Activated B cell treated with CpG ODN at 0.5 μM for 24 hours (primary cell): ENCODE measurements at regions of chr3 and their contacts with region 1.

Region 1: DNA sequence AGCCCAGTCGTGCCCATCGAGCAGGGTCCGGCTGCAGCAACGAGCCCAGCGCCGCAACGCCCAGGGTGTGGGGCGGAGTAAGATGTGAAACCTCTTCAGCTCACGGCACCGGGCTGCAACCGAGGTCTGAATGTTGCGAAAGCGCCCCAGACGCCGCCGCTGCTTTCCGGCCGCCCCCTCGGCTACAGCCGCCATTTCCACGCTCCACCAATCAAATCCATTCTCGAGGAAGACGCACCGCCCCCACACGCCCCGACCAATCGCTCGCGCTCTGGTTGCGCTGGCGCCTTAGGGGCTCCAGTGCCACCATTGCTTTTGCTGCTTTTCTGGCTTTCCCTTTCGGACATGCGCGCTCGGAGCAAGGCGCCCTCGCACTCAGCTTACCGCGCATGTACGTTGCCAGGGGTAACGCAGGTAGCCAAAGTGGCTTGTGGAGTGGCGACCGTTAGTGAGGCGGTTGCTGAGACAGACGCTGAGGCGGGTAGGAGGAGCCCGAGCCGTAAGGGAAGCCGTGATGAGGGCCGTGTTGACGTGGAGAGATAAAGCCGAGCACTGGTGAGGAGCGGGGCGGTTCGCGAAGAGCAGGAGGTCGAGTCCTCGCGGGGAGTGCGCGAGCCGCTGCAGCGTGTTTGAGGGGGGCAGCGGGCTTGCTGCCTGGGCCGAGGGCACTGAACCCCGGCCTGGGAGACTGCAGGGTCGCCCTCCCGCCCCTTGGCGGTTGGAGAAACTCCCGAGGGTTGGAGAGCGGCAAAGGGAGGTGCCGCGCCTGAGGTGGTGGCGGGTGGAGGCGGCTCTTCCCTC is at the starts of genes IFT122 and MBD4:
- DNase-seq: peak; percentile 92
- ATAC-seq: peak; percentile 83
- H3K4me3 Mint-ChIP-seq: peak within 1 kb of the TSS; percentile 96
- H3K27ac Mint-ChIP-seq: peak within 1 kb of the TSS; percentile 96
- H3K4me1 Mint-ChIP-seq: peaks cover 60% of the 10 kb centered on the region
- H3K27me3 Mint-ChIP-seq: no peaks in the 10 kb centered on the region
- CTCF ChIP-seq: no peak
- total RNA-seq, gene IFT122: 18.7 and 19.2 TPM in 2 replicates
- total RNA-seq, gene MBD4: 86.3 and 98.7 TPM in 2 replicates

Region 2: GRCh38 chr3:128794770-128795649 is 645.0 kb before region 1 on chr3:
- CTCF ChIA-PET with region 1: no interaction called
- POLR2A ChIA-PET with region 1: no interaction called
- intact Hi-C with region 1: no loop called
- DNase-seq: no peak
- ATAC-seq: peak; percentile 100
- H3K4me3 Mint-ChIP-seq: no peak overlapping the region
- H3K27ac Mint-ChIP-seq: peak overlapping the region; percentile 30
- H3K4me1 Mint-ChIP-seq: peaks cover 50% of the 10 kb centered on the region
- H3K27me3 Mint-ChIP-seq: no peaks in the 10 kb centered on the region
- CTCF ChIP-seq: no peak

Region 3: GRCh38 chr3:129183569-129184395 is 256.2 kb before region 1 on chr3 and contains the start of gene CNBP:
- CTCF ChIA-PET with region 1: no interaction called
- POLR2A ChIA-PET with region 1: interaction called, 7 read pairs
- intact Hi-C with region 1: loop called (anchors 2 kb)
- DNase-seq: peak; percentile 92
- ATAC-seq: peak; percentile 95
- H3K4me3 Mint-ChIP-seq: peak within 1 kb of the TSS; percentile 95
- H3K27ac Mint-ChIP-seq: peak within 1 kb of the TSS; percentile 95
- H3K4me1 Mint-ChIP-seq: peaks cover 50% of the 10 kb centered on the region
- H3K27me3 Mint-ChIP-seq: no peaks in the 10 kb centered on the region
- CTCF ChIP-seq: no peak
- total RNA-seq, gene CNBP: 281 and 303 TPM in 2 replicates

Region 4: DNA sequence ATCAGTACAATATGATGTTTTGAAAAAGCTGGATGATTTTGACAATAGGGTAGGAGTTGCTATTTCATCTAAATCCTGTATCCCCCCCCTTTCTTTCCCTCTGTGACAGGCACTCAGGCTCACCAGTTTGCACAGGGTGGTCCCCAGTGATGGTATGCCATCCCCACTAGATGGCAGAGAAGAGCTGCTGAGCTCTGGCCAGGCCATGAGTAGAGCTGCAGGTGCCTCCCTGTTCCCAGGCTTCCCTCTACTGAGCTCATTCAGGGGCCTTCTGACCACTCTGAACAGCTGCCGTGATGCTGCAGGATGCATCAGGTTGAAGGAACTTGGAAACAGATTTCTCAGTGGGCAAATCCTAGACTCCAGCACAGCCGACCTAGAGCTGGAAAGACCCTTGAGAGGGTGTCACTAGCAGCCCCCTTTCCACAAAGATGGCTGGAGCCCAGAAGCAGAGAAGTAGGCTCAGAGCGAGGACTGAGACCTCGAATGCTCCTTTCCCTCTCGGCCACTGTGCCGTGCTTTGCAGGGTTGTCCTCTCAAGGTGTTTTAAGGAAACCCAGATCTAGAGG is 56.6 kb before region 1 on chr3:
- CTCF ChIA-PET with region 1: interaction called, 9 read pairs
- POLR2A ChIA-PET with region 1: interaction called, 7 read pairs
- intact Hi-C with region 1: loop called (anchors 5 kb)
- DNase-seq: peak; percentile 26
- ATAC-seq: peak; percentile 98
- H3K4me3 Mint-ChIP-seq: no peak overlapping the region
- H3K27ac Mint-ChIP-seq: no peak overlapping the region
- H3K4me1 Mint-ChIP-seq: no peaks in the 10 kb centered on the region
- H3K27me3 Mint-ChIP-seq: no peaks in the 10 kb centered on the region
- CTCF ChIP-seq: peak; percentile 23

Region 5: GRCh38 chr3:129576514-129577352 is 136.7 kb after region 1 on chr3:
- CTCF ChIA-PET with region 1: no interaction called
- POLR2A ChIA-PET with region 1: interaction called, 10 read pairs
- intact Hi-C with region 1: loop called (anchors 5 kb)
- DNase-seq: peak; percentile 53
- ATAC-seq: peak; percentile 63
- H3K4me3 Mint-ChIP-seq: peak overlapping the region; percentile 48
- H3K27ac Mint-ChIP-seq: peak overlapping the region; percentile 86
- H3K4me1 Mint-ChIP-seq: peaks cover 61% of the 10 kb centered on the region
- H3K27me3 Mint-ChIP-seq: no peaks in the 10 kb centered on the region
- CTCF ChIP-seq: no peak

Region 6: DNA sequence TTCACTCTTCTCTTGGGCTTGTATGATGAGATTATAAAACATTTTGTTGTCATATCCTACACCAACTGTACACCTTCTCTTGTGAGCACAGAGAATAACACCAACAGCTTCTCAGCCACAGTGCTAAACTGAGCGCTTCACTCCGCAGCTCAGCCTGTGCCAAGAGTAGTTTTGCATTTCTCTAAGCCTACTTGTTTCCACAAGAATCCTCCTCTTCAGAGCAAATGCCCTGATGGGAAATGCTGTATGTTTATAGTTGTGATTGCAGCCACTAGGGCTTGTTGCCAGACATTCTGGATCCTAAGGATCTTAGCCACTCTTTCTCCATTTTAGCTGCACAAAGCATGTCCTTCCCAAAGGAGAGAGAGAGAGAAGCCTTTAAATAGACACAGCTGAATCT is 305.2 kb after region 1 on chr3:
- CTCF ChIA-PET with region 1: no interaction called
- POLR2A ChIA-PET with region 1: no interaction called
- intact Hi-C with region 1: no loop called
- DNase-seq: no peak
- ATAC-seq: no peak
- H3K4me3 Mint-ChIP-seq: no peak overlapping the region
- H3K27ac Mint-ChIP-seq: no peak overlapping the region
- H3K4me1 Mint-ChIP-seq: peaks cover 17% of the 10 kb centered on the region
- H3K27me3 Mint-ChIP-seq: no peaks in the 10 kb centered on the region
- CTCF ChIP-seq: no peak

Region 7: GRCh38 chr3:130111185-130111864 is 671.3 kb after region 1 on chr3:
- CTCF ChIA-PET with region 1: no interaction called
- POLR2A ChIA-PET with region 1: interaction called, 5 read pairs
- intact Hi-C with region 1: loop called (anchors 1 kb)
- DNase-seq: peak; percentile 94
- ATAC-seq: peak; percentile 100
- H3K4me3 Mint-ChIP-seq: peak overlapping the region; percentile 98
- H3K27ac Mint-ChIP-seq: peak overlapping the region; percentile 100
- H3K4me1 Mint-ChIP-seq: peaks cover 25% of the 10 kb centered on the region
- H3K27me3 Mint-ChIP-seq: no peaks in the 10 kb centered on the region
- CTCF ChIP-seq: no peak